B cell (primary cell): ENCODE measurements at regions of chr2 and their contacts with region 1.

Region 1: GRCh38 chr2:157492189-157492773 is 48.4 kb upstream of the CYTIP start:
- DNase-seq: peak; percentile 81
- ATAC-seq: peak; percentile 96
- H3K4me3 ChIP-seq: no peak overlapping the region
- H3K4me3 Mint-ChIP-seq: no peak overlapping the region
- H3K27ac ChIP-seq: no peak overlapping the region
- H3K27ac Mint-ChIP-seq: no peak overlapping the region
- H3K4me1 ChIP-seq: peaks cover 6 to 14% of the 10 kb centered on the region in 2 donors
- H3K4me1 Mint-ChIP-seq: peaks cover 20% of the 10 kb centered on the region
- H3K27me3 ChIP-seq: no peaks in the 10 kb centered on the region
- H3K27me3 Mint-ChIP-seq: no peaks in the 10 kb centered on the region
- CTCF ChIP-seq: peak; percentile 91

Region 2: GRCh38 chr2:157433394-157433793 is 58.9 kb before region 1 on chr2:
- CTCF ChIA-PET with region 1: interaction called, 25 read pairs
- POLR2A ChIA-PET with region 1: interaction called, 3 read pairs
- intact Hi-C with region 1: no loop called
- DNase-seq: no peak
- ATAC-seq: no peak
- H3K4me3 ChIP-seq: no peak overlapping the region
- H3K4me3 Mint-ChIP-seq: peak overlapping the region; percentile 68
- H3K27ac ChIP-seq: peak overlapping the region in 1 of 2 donors; percentile 34
- H3K27ac Mint-ChIP-seq: peak overlapping the region; percentile 39
- H3K4me1 ChIP-seq: peaks cover 65 to 73% of the 10 kb centered on the region in 2 donors
- H3K4me1 Mint-ChIP-seq: peaks cover 82% of the 10 kb centered on the region
- H3K27me3 ChIP-seq: no peaks in the 10 kb centered on the region
- H3K27me3 Mint-ChIP-seq: no peaks in the 10 kb centered on the region
- CTCF ChIP-seq: no peak

Region 3: DNA sequence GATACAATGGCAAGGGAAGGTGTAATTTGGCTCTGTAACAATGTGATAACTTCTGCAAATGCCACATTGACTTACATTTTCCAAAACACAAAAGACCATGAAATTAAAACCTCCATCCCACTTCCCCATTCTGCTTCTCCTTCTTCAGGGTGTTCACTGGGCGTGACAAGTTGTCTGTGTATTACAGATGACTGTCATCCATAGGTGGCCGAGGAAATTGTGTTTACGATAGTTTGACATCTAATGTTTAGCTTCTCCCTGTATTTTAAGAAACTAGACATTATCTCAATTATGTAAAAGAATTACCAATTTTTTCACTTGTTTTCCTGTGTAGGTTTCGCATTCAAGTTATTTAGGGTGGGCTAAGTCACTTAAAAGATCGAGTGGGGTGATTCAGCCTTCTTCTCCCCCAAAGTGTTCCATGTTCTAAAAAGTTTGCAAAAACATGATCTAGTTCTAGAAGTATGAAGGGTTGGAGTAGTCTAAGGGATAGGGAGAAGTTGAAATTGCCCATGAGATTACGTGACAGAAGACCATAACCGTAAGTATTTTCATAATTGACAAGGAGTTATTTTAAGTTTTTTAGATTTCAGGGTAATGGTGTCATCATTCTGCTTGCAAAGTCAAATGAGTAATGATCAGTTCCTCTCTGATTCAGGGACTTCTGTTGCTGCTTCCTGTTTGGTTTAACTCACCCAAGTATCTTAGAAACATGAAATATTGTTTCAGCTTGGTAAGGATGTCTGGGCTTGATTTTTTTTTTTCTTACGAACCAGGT is 23.2 kb before region 1 on chr2:
- CTCF ChIA-PET with region 1: interaction called, 128 read pairs
- POLR2A ChIA-PET with region 1: interaction called, 3 read pairs
- intact Hi-C with region 1: loop called (anchors 1 kb)
- DNase-seq: peak; percentile 91
- ATAC-seq: peak; percentile 80
- H3K4me3 ChIP-seq: peak overlapping the region; percentile 38 to 89 (median 55)
- H3K4me3 Mint-ChIP-seq: peak overlapping the region; percentile 87
- H3K27ac ChIP-seq: peak overlapping the region; percentile 96 to 99
- H3K27ac Mint-ChIP-seq: peak overlapping the region; percentile 99
- H3K4me1 ChIP-seq: peaks cover 61 to 68% of the 10 kb centered on the region in 2 donors
- H3K4me1 Mint-ChIP-seq: peaks cover 76% of the 10 kb centered on the region
- H3K27me3 ChIP-seq: no peaks in the 10 kb centered on the region
- H3K27me3 Mint-ChIP-seq: no peaks in the 10 kb centered on the region
- CTCF ChIP-seq: no peak

Region 4: GRCh38 chr2:157628477-157629415 is 136.5 kb after region 1 on chr2 and contains the start of gene ACVR1C:
- CTCF ChIA-PET with region 1: interaction called, 4 read pairs
- POLR2A ChIA-PET with region 1: no interaction called
- intact Hi-C with region 1: loop called (anchors 1 kb)
- DNase-seq: peak; percentile 70
- ATAC-seq: peak; percentile 85
- H3K4me3 ChIP-seq: peak within 1 kb of the TSS; percentile 34 to 68 (median 57)
- H3K4me3 Mint-ChIP-seq: peak within 1 kb of the TSS; percentile 85
- H3K27ac ChIP-seq: no peak within 1 kb of the TSS
- H3K27ac Mint-ChIP-seq: peak within 1 kb of the TSS; percentile 63
- H3K4me1 ChIP-seq: peaks cover 12 to 17% of the 10 kb centered on the region in 2 donors
- H3K4me1 Mint-ChIP-seq: peaks cover 23% of the 10 kb centered on the region
- H3K27me3 ChIP-seq: peaks cover 0 to 13% (median 2%) of the 10 kb centered on the region in 4 experiments
- H3K27me3 Mint-ChIP-seq: peaks cover 19% of the 10 kb centered on the region
- CTCF ChIP-seq: peak; percentile 44
- total RNA-seq, gene ACVR1C: 0.39 and 0.52 TPM in 2 replicates

Region 5: DNA sequence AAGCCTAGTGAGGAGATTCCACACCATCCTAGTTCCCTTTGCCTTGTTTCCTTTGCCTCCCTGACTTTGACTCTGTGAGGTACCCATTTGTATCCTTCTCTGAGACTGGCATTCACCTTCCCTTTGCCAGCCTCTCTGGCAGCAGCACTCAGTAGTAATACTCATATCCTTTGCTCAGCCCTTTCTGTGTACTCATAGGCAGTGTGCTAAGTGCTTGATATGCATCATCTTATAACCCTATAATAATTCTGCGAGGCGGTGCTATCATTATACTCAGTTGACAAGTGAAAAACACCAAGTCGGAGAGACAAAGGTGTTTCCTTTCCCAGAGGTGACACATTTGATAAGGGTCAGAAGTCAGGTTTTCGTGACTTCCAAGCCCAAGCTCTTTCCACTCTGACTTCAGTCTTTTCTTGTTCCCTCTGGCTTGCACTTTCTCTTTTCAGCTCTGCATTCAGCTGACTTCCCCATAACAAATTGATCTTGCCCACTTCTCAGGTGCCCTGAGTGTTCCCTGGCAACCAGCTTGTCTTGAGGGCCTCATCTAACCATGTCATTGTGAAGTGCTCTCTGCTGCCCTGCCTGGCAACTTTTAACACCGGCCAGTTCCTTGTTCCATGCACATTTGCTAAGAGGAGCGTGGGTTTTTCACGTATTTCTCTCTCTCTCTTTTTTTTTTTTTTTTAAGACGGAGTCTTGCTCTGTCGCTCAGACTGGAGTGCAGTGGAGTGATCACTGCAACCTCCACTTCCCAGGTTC is 514.9 kb after region 1 on chr2:
- CTCF ChIA-PET with region 1: interaction called, 8 read pairs
- POLR2A ChIA-PET with region 1: no interaction called
- intact Hi-C with region 1: loop called (anchors 1 kb)
- DNase-seq: peak; percentile 42
- ATAC-seq: peak; percentile 41
- H3K4me3 ChIP-seq: no peak overlapping the region
- H3K4me3 Mint-ChIP-seq: no peak overlapping the region
- H3K27ac ChIP-seq: no peak overlapping the region
- H3K27ac Mint-ChIP-seq: no peak overlapping the region
- H3K4me1 ChIP-seq: no peaks in the 10 kb centered on the region
- H3K4me1 Mint-ChIP-seq: peaks cover 5% of the 10 kb centered on the region
- H3K27me3 ChIP-seq: peaks cover 0 to 4% (median 2%) of the 10 kb centered on the region in 4 experiments
- H3K27me3 Mint-ChIP-seq: peaks cover 17% of the 10 kb centered on the region
- CTCF ChIP-seq: no peak